Activated CD8-positive, alpha-beta memory T cell treated with anti-CD3 and anti-CD28 coated beads, Interleukin-2, amount 10 ng/mL, durations not matched to agents 7 days and 5 days (primary cell): ENCODE measurements at regions of chr6 and their contacts with region 1.

Region 1: GRCh38 chr6:28838634-28839442 is 84.9 kb downstream of the TRIM27 start:
- DNase-seq: peak; percentile 90
- ATAC-seq: peak; percentile 85
- H3K4me3 Mint-ChIP-seq: peak overlapping the region; percentile 88
- H3K27ac Mint-ChIP-seq: peak overlapping the region; percentile 77
- H3K4me1 Mint-ChIP-seq: peaks cover 25% of the 10 kb centered on the region
- H3K27me3 Mint-ChIP-seq: peaks cover 61% of the 10 kb centered on the region

Region 2: DNA sequence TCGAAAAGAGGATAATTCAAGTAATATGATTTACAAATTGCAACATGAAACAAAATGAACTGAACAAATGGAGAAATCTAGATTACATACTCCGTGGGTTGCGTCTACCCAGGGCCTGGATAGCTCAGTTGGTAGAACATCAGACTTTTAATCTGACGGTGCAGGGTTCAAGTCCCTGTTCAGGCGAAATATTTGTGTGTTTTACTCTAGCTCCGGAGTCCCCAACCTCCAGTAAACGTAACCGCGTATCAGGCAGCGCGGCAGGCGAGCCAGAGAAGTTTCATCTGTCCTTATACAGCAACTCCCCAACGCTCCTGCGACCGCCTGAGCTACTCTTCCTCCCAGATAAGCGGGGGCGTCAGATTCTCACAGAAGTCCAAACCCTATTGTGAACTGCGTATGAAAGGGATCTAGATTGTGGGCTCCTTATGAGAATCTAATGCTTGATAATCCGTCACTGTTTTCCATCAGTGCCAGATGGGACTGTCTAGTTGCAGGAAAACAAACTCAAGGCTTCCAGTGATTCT is 91.1 kb before region 1 on chr6:
- CTCF ChIA-PET with region 1: no interaction called
- DNase-seq: no peak
- ATAC-seq: no peak
- H3K4me3 Mint-ChIP-seq: no peak overlapping the region
- H3K27ac Mint-ChIP-seq: no peak overlapping the region
- H3K4me1 Mint-ChIP-seq: no peaks in the 10 kb centered on the region
- H3K27me3 Mint-ChIP-seq: peaks cover 41% of the 10 kb centered on the region

Region 3: DNA sequence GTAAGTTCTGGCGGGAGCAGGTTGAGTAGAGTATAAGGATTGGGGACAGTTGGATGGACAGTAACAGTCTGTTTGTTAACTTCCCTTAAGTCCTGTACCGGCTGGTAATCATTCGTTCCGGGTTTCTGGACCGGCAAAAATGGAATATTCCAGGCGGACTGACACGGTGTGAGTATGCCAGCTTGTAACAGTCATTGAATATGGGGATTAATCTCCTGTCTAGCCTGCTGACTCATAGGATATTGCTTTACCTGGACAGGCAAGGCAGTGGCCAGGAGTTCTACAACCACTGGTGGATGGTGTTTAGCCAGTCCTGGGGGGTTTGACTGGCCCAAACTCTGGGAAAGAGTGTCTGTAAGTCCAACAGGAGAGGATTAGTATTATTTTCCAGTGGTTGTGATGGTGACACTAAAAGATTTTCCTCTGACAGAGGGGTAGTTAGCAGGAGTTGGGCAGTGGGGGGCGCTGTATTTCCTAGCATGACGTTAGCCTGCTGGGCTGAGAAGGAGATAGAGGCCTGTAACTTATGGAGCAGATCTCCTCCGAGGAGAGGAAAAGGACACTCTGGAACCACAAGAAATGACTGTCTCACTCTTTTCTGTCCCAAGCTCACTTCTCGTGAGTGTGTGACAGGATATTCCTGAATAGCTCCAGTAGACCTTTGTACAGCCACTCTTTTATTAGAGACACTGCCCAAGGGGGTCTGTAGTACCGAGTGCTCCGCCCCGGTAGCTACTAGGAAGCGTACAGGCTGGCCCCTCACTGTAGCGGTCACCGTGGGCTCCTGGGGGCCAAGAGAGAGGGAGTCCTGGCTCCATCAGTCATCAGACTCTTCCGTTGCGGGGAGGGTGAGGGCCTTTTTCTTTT is 67.2 kb before region 1 on chr6:
- CTCF ChIA-PET with region 1: no interaction called
- DNase-seq: no peak
- ATAC-seq: no peak
- H3K4me3 Mint-ChIP-seq: no peak overlapping the region
- H3K27ac Mint-ChIP-seq: no peak overlapping the region
- H3K4me1 Mint-ChIP-seq: no peaks in the 10 kb centered on the region
- H3K27me3 Mint-ChIP-seq: peaks cover 92% of the 10 kb centered on the region

Region 4: GRCh38 chr6:28807682-28808280 is 31.1 kb before region 1 on chr6:
- CTCF ChIA-PET with region 1: no interaction called
- DNase-seq: peak; percentile 46
- ATAC-seq: no peak
- H3K4me3 Mint-ChIP-seq: peak overlapping the region; percentile 17
- H3K27ac Mint-ChIP-seq: no peak overlapping the region
- H3K4me1 Mint-ChIP-seq: peaks cover 20% of the 10 kb centered on the region
- H3K27me3 Mint-ChIP-seq: peaks cover 85% of the 10 kb centered on the region

Region 5: DNA sequence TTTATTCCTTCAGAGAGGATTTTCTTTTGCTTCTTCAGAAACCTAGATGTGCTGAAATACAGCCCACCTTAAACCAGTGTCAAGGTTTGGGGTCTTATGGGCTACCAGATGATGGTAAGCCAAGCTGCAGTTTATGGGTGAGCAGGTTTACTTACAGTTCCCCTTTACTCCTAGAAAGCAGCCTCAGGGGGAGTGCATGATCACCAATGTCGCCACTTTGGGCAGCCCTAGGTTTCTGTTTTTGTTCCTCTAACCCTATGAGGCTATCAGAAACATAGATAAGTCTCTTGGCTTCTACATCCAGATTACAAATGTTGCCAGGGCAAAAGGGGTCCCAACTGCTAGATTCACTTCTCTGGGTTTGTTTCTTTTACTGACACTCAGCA is 17.8 kb after region 1 on chr6:
- CTCF ChIA-PET with region 1: interaction called, 17 read pairs
- DNase-seq: no peak
- ATAC-seq: no peak
- H3K4me3 Mint-ChIP-seq: no peak overlapping the region
- H3K27ac Mint-ChIP-seq: no peak overlapping the region
- H3K4me1 Mint-ChIP-seq: peaks cover 7% of the 10 kb centered on the region
- H3K27me3 Mint-ChIP-seq: peaks cover 38% of the 10 kb centered on the region

Region 6: DNA sequence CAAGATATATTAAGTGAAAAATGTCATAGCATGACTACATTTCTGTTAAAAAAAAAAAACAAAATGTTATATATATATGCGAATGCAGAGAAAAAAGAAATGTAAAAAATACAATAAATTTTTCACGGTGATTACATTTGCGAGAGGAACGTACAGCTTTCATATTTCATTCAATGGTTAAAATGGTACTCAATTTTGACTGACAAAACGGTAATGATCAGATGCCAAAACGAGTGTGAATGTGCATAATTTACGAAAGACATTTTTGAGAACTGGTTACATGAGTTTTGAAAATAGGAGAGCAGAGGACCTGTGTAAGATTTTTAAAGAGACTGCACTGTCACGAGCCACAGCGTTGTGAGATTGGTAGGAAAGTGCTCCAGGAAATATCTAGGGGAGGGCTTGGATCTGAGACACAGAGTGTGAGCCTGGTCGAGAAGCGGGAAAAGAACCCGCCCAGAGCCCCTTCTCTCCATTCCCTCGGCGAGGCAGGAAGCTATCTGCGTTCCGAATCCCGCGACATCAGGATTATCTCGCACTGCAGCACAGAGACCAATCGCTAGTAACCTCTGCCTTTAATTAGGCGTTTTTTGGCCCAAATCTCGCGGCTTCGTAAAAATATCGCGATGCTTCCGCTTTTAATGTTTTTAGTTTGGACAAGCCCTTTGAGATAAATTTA is 56.4 kb after region 1 on chr6:
- CTCF ChIA-PET with region 1: interaction called, 26 read pairs
- DNase-seq: peak; percentile 97
- ATAC-seq: peak; percentile 85
- H3K4me3 Mint-ChIP-seq: peak overlapping the region; percentile 99
- H3K27ac Mint-ChIP-seq: peak overlapping the region; percentile 100
- H3K4me1 Mint-ChIP-seq: peaks cover 12% of the 10 kb centered on the region
- H3K27me3 Mint-ChIP-seq: no peaks in the 10 kb centered on the region

Region 7: GRCh38 chr6:28940858-28941680 is 102.2 kb after region 1 on chr6:
- CTCF ChIA-PET with region 1: interaction called, 66 read pairs
- DNase-seq: peak; percentile 89
- ATAC-seq: peak; percentile 76
- H3K4me3 Mint-ChIP-seq: peak overlapping the region; percentile 89
- H3K27ac Mint-ChIP-seq: peak overlapping the region; percentile 96
- H3K4me1 Mint-ChIP-seq: peaks cover 44% of the 10 kb centered on the region
- H3K27me3 Mint-ChIP-seq: no peaks in the 10 kb centered on the region

Region 8: GRCh38 chr6:28981833-28982475 is 143.1 kb after region 1 on chr6:
- CTCF ChIA-PET with region 1: interaction called, 28 read pairs
- DNase-seq: peak; percentile 79
- ATAC-seq: peak; percentile 70
- H3K4me3 Mint-ChIP-seq: peak overlapping the region; percentile 90
- H3K27ac Mint-ChIP-seq: peak overlapping the region; percentile 86
- H3K4me1 Mint-ChIP-seq: peaks cover 54% of the 10 kb centered on the region
- H3K27me3 Mint-ChIP-seq: peaks cover 63% of the 10 kb centered on the region

Region 9: GRCh38 chr6:29016559-29017427 is 178.0 kb after region 1 on chr6:
- CTCF ChIA-PET with region 1: interaction called, 103 read pairs
- DNase-seq: peak; percentile 90
- ATAC-seq: peak; percentile 89
- H3K4me3 Mint-ChIP-seq: peak overlapping the region; percentile 82
- H3K27ac Mint-ChIP-seq: peak overlapping the region; percentile 92
- H3K4me1 Mint-ChIP-seq: peaks cover 16% of the 10 kb centered on the region
- H3K27me3 Mint-ChIP-seq: peaks cover 36% of the 10 kb centered on the region